B cell (primary cell): ENCODE measurements at regions of chr12 and their contacts with region 1.

Region 1: DNA sequence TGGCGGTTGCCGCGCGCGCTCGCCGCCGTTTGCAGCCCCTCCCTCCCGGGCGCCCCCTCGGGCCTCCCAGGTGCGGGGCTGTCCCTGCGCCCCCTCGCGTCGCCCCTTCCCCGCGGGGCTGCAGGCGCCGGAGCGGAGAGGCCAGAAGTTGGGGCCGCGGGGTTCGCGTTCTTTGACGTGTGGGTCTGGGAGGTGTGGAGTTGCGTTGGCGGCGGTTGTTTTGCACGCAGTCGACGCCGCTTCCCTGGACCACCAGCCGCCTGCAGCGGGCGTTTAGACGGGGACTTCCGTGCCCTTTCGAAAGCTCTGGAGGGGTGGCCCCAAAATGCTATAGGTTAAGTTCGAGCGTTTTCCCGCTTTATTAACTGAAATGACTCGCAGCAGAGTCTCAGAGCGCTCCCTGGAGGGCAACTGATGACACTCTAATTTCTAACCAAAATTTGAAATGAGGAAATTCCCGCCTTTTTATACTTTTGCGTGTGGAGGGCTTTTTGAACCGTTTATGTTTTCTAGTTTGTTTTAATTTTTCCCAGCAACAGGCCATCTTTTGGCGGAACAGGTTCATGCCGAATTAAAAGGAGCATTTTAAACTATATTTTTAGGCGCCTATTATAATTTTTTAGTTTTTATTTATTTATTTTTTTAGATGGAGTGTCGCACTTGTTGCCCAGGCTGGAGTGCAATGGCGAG is 939 bp downstream of the TMPO start:
- DNase-seq: peak; percentile 93
- ATAC-seq: peak; percentile 54
- H3K4me3 ChIP-seq: peak overlapping the region; percentile 57 to 100 (median 91)
- H3K4me3 Mint-ChIP-seq: peak overlapping the region; percentile 99
- H3K27ac ChIP-seq: peak overlapping the region; percentile 64 to 78
- H3K27ac Mint-ChIP-seq: peak overlapping the region; percentile 99
- H3K4me1 ChIP-seq: peaks cover 39 to 53% of the 10 kb centered on the region in 2 donors
- H3K4me1 Mint-ChIP-seq: peaks cover 50% of the 10 kb centered on the region
- H3K27me3 ChIP-seq: no peaks in the 10 kb centered on the region
- H3K27me3 Mint-ChIP-seq: no peaks in the 10 kb centered on the region
- CTCF ChIP-seq: peak; percentile 80

Region 2: DNA sequence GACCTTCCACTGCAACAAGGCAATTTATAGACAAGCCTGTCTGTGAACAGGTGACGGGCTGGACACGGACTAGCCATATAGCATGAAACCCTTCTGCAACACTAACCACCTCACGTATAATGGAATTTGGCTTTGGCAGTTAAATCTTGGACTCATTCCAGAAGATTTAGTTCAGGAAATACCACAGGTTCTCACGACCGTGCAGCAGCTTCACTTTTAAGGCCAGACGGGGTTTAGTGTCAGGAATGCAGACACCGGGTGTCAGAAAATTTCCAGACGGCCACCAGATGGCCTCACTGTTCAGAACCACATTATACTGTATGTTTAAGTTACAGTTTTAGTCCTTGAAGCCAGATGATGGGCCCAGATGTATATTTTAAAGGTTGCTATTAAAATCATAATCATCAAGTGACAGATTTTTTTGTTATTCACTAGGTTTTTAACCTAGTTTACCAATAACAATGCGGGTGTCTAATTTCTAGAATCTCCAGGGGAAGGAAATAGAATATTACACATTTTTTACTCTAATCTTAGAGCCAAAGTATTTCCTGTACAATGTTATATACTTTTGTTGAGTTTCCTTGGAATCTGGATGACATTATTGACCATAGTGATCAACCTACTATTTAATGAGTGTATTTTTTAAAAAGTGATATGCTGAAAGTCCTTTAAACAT is 91.5 kb before region 1 on chr12:
- CTCF ChIA-PET with region 1: interaction called, 3 read pairs
- POLR2A ChIA-PET with region 1: no interaction called
- intact Hi-C with region 1: loop called (anchors 1 kb)
- DNase-seq: peak; percentile 55
- ATAC-seq: peak; percentile 36
- H3K4me3 ChIP-seq: no peak overlapping the region
- H3K4me3 Mint-ChIP-seq: no peak overlapping the region
- H3K27ac ChIP-seq: no peak overlapping the region
- H3K27ac Mint-ChIP-seq: no peak overlapping the region
- H3K4me1 ChIP-seq: peaks cover 0 to 3% of the 10 kb centered on the region in 2 donors
- H3K4me1 Mint-ChIP-seq: no peaks in the 10 kb centered on the region
- H3K27me3 ChIP-seq: no peaks in the 10 kb centered on the region
- H3K27me3 Mint-ChIP-seq: peaks cover 3% of the 10 kb centered on the region
- CTCF ChIP-seq: peak; percentile 67

Region 3: GRCh38 chr12:98503592-98504367 is 12.5 kb before region 1 on chr12:
- CTCF ChIA-PET with region 1: interaction called, 42 read pairs
- POLR2A ChIA-PET with region 1: interaction called, 36 read pairs
- intact Hi-C with region 1: loop called (anchors 1 kb)
- DNase-seq: peak; percentile 98
- ATAC-seq: peak; percentile 88
- H3K4me3 ChIP-seq: peak overlapping the region; percentile 75 to 96 (median 95)
- H3K4me3 Mint-ChIP-seq: peak overlapping the region; percentile 100
- H3K27ac ChIP-seq: peak overlapping the region; percentile 98 to 99
- H3K27ac Mint-ChIP-seq: peak overlapping the region; percentile 100
- H3K4me1 ChIP-seq: peaks cover 4 to 13% of the 10 kb centered on the region in 2 donors
- H3K4me1 Mint-ChIP-seq: peaks cover 23% of the 10 kb centered on the region
- H3K27me3 ChIP-seq: no peaks in the 10 kb centered on the region
- H3K27me3 Mint-ChIP-seq: peaks cover 3% of the 10 kb centered on the region
- CTCF ChIP-seq: no peak

Region 4: DNA sequence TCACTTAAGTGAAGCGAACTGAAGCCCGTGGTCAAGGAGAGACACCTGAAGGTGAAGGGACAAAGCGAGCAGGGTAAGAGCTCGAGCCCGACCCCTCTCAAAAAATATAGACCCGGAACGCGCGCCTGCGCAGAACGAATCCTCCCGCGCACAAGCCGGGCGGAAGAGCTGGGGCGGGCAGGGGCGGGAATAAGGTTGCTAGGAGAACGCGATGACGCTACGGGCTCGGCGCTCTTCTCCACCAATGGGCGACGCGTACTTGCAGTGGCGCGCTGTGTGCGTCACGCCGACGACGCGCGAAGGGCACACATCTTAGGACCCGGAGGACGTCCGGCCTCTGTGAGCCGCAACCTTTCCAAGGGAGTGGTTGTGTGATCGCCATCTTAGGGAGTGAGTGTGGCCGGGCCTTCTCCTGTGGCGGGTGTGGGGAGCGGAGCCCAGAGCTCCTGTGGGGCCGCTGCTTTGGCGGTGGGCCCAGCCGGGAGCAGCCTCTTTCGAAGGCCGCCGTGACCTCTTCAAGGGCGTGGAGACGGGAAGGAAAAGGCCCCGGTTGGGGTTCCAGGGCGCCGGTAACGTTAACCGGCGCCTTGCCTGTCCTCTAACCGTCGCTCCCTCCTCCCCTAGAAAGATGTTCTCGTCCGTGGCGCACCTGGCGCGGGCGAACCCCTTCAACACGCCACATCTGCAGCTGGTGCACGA is 77.2 kb after region 1 on chr12 and contains the start of gene SLC25A3:
- CTCF ChIA-PET with region 1: interaction called, 4 read pairs
- POLR2A ChIA-PET with region 1: interaction called, 12 read pairs
- intact Hi-C with region 1: loop called (anchors 1 kb)
- DNase-seq: peak; percentile 99
- ATAC-seq: peak; percentile 97
- H3K4me3 ChIP-seq: peak within 1 kb of the TSS; percentile 91 to 100 (median 96)
- H3K4me3 Mint-ChIP-seq: peak within 1 kb of the TSS; percentile 91
- H3K27ac ChIP-seq: peak within 1 kb of the TSS; percentile 96 to 98
- H3K27ac Mint-ChIP-seq: peak within 1 kb of the TSS; percentile 98
- H3K4me1 ChIP-seq: peaks cover 20 to 25% of the 10 kb centered on the region in 2 donors
- H3K4me1 Mint-ChIP-seq: peaks cover 34% of the 10 kb centered on the region
- H3K27me3 ChIP-seq: no peaks in the 10 kb centered on the region
- H3K27me3 Mint-ChIP-seq: no peaks in the 10 kb centered on the region
- CTCF ChIP-seq: no peak
- total RNA-seq, gene SLC25A3: 304 and 308 TPM in 2 replicates

Region 5: DNA sequence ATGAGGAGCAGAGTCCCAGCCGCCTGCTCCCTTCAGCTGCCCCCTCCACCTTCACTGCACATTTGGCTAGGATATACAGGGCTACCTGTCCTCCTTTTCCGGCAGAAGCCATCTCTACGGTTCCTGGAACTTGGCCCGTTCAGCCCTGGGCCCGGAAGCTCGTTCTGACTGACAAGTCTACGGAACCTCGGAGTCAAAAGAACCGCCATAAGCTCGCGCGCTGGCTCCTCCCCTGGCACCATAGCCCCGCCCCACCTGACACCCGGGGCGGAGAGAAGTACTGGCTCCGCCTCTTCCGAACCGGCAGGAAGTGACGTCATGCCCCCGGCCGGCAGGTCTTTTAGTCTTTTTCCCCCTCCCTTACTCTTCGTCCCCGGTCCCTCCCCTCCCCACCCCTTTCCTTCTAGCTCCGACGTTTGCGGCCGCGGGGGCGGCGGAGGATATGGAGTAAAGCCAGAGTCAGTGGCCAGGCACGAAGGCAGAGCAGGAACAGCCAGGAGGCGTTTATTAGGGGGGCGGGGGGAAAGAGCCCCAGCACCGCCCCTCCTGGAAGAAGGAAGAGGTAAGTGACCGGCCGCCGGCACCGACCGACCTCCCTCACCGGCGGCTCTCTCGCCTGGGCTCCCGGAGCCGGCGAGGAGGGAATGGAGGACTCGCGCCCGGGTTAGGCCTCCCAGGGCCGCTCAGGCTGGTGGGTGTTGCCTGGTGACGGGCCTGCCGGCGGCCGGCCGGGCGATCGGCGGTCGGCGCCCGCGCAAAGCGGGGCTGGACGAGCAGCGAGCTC is 1750.7 kb after region 1 on chr12 and contains the starts of genes DEPDC4 and SCYL2:
- CTCF ChIA-PET with region 1: no interaction called
- POLR2A ChIA-PET with region 1: no interaction called
- intact Hi-C with region 1: loop called (anchors 10 kb)
- DNase-seq: peak; percentile 98
- ATAC-seq: peak; percentile 93
- H3K4me3 ChIP-seq: peak within 1 kb of the TSS; percentile 81 to 95 (median 89)
- H3K4me3 Mint-ChIP-seq: peak within 1 kb of the TSS; percentile 99
- H3K27ac ChIP-seq: peak within 1 kb of the TSS; percentile 92 to 93
- H3K27ac Mint-ChIP-seq: peak within 1 kb of the TSS; percentile 94
- H3K4me1 ChIP-seq: peaks cover 22 to 23% of the 10 kb centered on the region in 2 donors
- H3K4me1 Mint-ChIP-seq: peaks cover 37% of the 10 kb centered on the region
- H3K27me3 ChIP-seq: no peaks in the 10 kb centered on the region
- H3K27me3 Mint-ChIP-seq: no peaks in the 10 kb centered on the region
- CTCF ChIP-seq: no peak
- total RNA-seq, gene DEPDC4: 0.36 and 1.2 TPM in 2 replicates
- total RNA-seq, gene SCYL2: 38.4 and 39.0 TPM in 2 replicates